RWPE1 (cell line): ENCODE measurements at regions of chr11 and their contacts with region 1.

Region 1: DNA sequence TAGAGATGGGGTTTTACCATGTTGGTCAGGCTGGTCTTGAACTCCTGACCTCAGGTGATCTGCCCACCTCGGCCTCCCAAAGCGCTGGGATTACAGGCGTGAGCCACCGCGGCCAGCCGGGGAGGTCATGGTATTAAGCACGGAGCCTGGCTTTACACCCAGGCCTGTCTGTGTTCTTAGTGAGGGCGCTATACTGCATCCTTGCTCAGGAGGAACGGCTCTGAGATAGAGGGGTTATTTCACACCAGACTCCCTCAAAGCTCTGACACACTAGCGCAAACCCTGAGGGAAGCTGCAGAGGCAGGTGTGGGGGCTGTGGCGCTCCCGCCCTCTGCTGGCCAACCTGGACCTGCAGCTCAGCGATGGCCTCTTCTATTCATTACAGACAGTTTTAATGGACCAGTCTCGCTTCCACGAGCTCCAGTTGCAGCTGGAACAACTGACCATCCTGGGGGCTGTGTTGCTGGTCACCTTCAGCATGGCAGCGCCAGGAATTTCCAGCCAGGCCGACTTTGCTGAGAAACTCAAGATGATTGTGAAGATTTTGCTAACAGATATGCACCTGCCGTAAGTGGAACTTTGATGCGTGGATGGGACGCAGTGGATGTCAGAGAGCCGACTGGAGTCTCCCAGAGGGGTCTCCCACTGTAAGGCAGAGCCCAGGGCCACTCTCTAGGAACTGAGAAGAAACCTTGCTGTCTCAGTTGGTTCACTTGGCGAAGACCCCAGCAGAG is 26.2 kb downstream of the TCP11L1 start:
- DNase-seq: peak; percentile 54
- H3K27ac ChIP-seq: peak overlapping the region; percentile 69
- CTCF ChIP-seq: peak; percentile 94

Region 2: DNA sequence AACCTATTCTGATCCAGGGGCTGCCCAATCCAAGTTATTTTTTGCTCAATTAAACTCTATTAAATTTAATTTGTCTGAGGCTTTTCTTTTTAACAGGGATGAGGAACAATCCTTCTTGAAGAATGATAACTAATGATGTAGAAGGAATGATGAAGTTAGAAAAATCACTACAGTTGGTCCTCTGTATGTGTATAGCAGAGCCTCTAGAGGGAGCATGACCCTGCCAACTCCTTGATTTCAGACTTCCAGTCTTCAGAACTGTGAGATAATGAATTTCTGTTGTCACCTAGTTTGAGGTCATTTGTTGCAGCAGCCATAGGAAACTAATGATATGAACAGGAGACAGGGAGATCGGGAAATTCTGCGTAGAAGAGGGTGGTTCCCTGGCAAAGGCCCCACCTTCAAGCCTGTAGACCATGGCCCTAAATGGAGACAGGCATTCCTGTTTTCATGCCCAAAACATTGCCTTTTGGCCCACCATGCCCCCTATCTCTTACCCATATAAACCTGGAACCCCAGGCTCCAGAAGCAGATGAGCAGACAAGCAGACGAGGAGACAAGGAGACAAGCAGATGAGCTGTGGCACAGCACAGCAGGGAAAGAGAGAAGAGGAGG is 180.7 kb before region 1 on chr11:
- CTCF ChIA-PET with region 1: no interaction called
- POLR2A ChIA-PET with region 1: no interaction called
- DNase-seq: no peak
- H3K27ac ChIP-seq: no peak overlapping the region
- CTCF ChIP-seq: peak; percentile 51

Region 3: DNA sequence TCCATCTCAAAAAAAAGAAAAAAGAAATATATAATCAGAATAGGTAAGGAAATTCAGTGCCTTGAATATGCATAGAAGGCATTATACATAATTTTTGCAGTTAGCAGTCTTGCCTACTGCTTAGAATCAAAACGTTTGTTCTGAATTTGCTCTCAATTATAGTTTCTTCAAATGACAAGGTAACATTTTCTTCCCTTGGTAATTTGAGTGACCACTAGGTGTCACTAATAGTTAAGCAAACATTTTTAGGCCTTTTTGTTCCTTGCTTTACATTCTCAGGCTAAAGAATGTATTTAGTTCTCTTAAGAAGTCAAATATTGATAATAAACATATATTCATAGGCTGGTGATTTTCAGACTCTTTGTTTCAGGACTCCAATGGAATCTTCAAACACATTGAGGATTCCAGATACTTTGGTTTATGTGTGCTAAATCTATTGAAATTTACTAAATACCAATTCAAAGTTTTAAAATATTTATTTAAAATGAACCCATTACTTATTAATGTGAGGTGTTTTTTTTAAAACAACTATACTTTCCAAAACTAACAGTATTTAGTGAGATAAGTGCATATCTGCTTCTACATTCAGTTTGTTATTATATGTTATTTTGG is 105.0 kb before region 1 on chr11:
- CTCF ChIA-PET with region 1: interaction called, 18 read pairs
- POLR2A ChIA-PET with region 1: no interaction called
- DNase-seq: peak; percentile 26
- H3K27ac ChIP-seq: no peak overlapping the region; the same call in 1 of the 2 replicates
- CTCF ChIP-seq: peak; percentile 62